CD4-positive, alpha-beta T cell (primary cell): ENCODE measurements at regions of chr17 and their contacts with region 1.

Region 1: GRCh38 chr17:17972126-17972951 is at the starts of genes DRC3 and TOM1L2:
- DNase-seq: peak; percentile 99 to 100 (median 100)
- ATAC-seq: peak; percentile 87
- H3K4me3 ChIP-seq: peak within 1 kb of the TSS; percentile 70
- H3K4me3 Mint-ChIP-seq: peak within 1 kb of the TSS; percentile 95
- H3K27ac ChIP-seq: peak within 1 kb of the TSS; percentile 76 to 79
- H3K27ac Mint-ChIP-seq: peak within 1 kb of the TSS; percentile 90
- H3K4me1 ChIP-seq: peaks cover 23% of the 10 kb centered on the region
- H3K4me1 Mint-ChIP-seq: peaks cover 49% of the 10 kb centered on the region
- H3K27me3 ChIP-seq: no peaks in the 10 kb centered on the region
- H3K27me3 Mint-ChIP-seq: no peaks in the 10 kb centered on the region
- CTCF ChIP-seq: no peak
- total RNA-seq, gene DRC3: 0.11 TPM in 1 of 2 experiments, not detected in the other
- total RNA-seq, gene TOM1L2: 28.5 to 30.5 TPM

Region 2: DNA sequence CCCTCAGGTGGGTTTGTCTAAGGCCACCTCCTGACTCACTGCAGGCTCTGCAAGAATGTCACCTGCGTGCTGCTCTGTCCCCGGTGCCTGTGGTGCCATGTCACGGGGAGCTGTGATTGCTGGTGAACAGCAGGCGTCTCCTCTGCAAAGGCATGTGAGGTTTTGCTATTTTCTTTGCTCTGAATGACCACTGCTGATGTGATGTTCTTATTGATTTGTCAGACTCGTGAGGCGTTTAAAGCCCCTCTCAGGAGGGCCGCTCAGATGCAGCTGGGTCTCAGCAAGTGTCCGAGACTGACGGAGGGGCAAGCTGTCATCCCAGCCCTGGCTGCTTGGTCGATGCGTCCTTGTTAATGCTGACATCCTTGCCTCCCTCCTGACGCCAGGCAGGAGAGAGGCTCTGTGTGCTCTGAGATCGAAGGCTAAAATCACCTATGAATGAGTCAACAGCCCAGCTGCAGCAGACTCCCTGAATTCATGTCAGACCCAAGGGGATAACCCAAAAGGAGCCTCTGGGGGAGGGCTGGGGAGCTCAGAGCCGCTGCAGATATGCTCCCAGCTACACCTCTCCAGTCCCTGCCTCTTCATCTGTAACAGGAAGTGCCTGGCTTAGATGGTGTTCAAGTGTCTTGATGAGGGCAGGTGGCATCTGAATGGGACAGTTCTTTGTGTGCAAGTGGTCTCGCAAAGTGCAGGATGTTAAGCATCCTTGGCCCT is 369.0 kb before region 1 on chr17:
- CTCF ChIA-PET with region 1: no interaction called
- POLR2A ChIA-PET with region 1: no interaction called
- intact Hi-C with region 1: no loop called
- DNase-seq: no peak
- ATAC-seq: no peak
- H3K4me3 ChIP-seq: no peak overlapping the region
- H3K4me3 Mint-ChIP-seq: no peak overlapping the region
- H3K27ac ChIP-seq: no peak overlapping the region
- H3K27ac Mint-ChIP-seq: no peak overlapping the region
- H3K4me1 ChIP-seq: no peaks in the 10 kb centered on the region
- H3K4me1 Mint-ChIP-seq: no peaks in the 10 kb centered on the region
- H3K27me3 ChIP-seq: no peaks in the 10 kb centered on the region
- H3K27me3 Mint-ChIP-seq: no peaks in the 10 kb centered on the region
- CTCF ChIP-seq: no peak

Region 3: GRCh38 chr17:17694169-17695081 is 277.9 kb before region 1 on chr17:
- CTCF ChIA-PET with region 1: no interaction called
- POLR2A ChIA-PET with region 1: no interaction called
- intact Hi-C with region 1: loop called in 1 of 2 experiments (anchors 5 kb)
- DNase-seq: peak; percentile 43 to 89 (median 63)
- ATAC-seq: peak; percentile 72
- H3K4me3 ChIP-seq: peak overlapping the region; percentile 76
- H3K4me3 Mint-ChIP-seq: peak overlapping the region; percentile 94
- H3K27ac ChIP-seq: peak overlapping the region; percentile 91 to 95
- H3K27ac Mint-ChIP-seq: peak overlapping the region; percentile 96
- H3K4me1 ChIP-seq: peaks cover 61% of the 10 kb centered on the region
- H3K4me1 Mint-ChIP-seq: peaks cover 62% of the 10 kb centered on the region
- H3K27me3 ChIP-seq: no peaks in the 10 kb centered on the region
- H3K27me3 Mint-ChIP-seq: no peaks in the 10 kb centered on the region
- CTCF ChIP-seq: no peak

Region 4: GRCh38 chr17:17808706-17809432 is 163.5 kb before region 1 on chr17:
- CTCF ChIA-PET with region 1: no interaction called
- POLR2A ChIA-PET with region 1: no interaction called
- intact Hi-C with region 1: no loop called
- DNase-seq: no peak
- ATAC-seq: no peak
- H3K4me3 ChIP-seq: no peak overlapping the region
- H3K4me3 Mint-ChIP-seq: no peak overlapping the region
- H3K27ac ChIP-seq: no peak overlapping the region
- H3K27ac Mint-ChIP-seq: peak overlapping the region; percentile 47
- H3K4me1 ChIP-seq: peaks cover 9% of the 10 kb centered on the region
- H3K4me1 Mint-ChIP-seq: peaks cover 8% of the 10 kb centered on the region
- H3K27me3 ChIP-seq: no peaks in the 10 kb centered on the region
- H3K27me3 Mint-ChIP-seq: no peaks in the 10 kb centered on the region
- CTCF ChIP-seq: no peak

Region 5: DNA sequence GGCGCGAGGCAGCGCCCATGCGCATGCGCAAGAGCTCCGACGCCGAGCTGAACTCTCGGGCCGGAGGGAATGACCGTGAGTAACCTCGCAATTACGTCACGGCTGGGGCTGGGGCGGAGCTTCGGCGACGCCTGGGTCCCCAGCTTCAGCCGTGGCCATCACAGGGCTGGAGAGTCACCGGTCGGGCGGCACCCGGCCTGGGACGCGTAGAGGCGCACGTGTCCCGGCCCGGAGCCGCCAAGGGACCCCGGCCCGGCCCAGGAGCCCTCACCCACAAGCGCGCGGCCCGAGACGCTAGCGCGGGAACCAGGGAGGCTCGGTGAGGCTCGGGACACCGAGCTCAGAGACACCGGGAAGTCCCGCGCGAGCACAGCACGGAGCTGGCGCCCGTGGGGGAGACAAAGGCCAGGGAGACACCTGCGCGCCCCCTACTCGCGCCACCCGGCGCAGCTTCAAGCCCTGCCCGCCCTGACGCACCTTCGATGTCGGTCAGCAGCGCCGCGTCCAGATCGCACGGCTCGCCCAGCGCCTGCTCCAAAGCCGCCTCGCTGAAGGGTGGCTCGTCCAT is 136.0 kb before region 1 on chr17:
- CTCF ChIA-PET with region 1: no interaction called
- POLR2A ChIA-PET with region 1: interaction called, 11 read pairs
- intact Hi-C with region 1: no loop called
- DNase-seq: peak; percentile 94 to 99 (median 97)
- ATAC-seq: peak; percentile 74
- H3K4me3 ChIP-seq: peak overlapping the region; percentile 77
- H3K4me3 Mint-ChIP-seq: peak overlapping the region; percentile 94
- H3K27ac ChIP-seq: peak overlapping the region; percentile 96 to 97
- H3K27ac Mint-ChIP-seq: peak overlapping the region; percentile 98
- H3K4me1 ChIP-seq: peaks cover 82% of the 10 kb centered on the region
- H3K4me1 Mint-ChIP-seq: peaks cover 69% of the 10 kb centered on the region
- H3K27me3 ChIP-seq: no peaks in the 10 kb centered on the region
- H3K27me3 Mint-ChIP-seq: no peaks in the 10 kb centered on the region
- CTCF ChIP-seq: no peak

Region 6: DNA sequence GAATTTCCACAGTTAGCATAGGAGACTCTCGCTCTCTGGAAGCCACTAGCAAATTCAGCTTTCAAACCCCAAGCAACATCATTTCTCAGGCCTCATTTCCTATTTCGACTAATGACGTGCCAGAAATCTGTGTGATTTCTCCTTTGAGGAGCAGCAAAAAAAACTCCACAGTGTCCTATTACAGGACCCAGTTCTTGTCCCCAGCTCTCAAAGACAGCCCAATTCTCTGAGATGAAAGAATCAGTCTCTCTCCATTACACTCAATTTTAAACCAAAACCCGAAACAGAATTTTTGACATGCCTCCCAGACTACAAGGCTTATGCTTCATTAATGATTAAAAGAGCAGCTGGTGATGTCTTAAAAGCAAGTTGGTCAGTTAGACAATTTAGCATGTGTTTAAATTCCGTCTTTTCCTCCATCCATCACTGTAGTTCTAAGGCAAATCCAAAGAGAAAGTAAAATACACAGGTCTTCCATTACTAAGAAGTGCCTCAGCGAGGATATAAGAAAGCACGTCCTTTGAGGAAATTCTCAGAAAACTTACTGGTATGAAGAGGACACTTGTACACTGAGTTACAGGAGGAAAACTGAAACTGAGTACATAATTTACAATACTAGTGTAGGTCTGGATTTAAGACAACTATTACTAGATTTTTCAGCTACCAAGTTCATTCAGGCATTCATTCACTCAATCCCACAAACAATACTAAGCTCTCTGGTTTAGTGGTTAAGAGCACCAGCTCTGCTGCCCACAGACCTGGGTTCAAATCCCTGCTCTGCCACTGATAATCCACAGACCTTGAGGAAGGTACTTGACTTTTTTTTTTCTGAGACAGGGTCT is 12.6 kb before region 1 on chr17:
- CTCF ChIA-PET with region 1: interaction called, 15 read pairs
- POLR2A ChIA-PET with region 1: interaction called, 115 read pairs
- intact Hi-C with region 1: loop called (anchors 2 kb)
- DNase-seq: peak in 4 of 14 experiments; percentile 16 to 68 (median 49)
- ATAC-seq: peak; percentile 37
- H3K4me3 ChIP-seq: peak overlapping the region; percentile 46
- H3K4me3 Mint-ChIP-seq: peak overlapping the region; percentile 85
- H3K27ac ChIP-seq: peak overlapping the region; percentile 64 to 92
- H3K27ac Mint-ChIP-seq: peak overlapping the region; percentile 97
- H3K4me1 ChIP-seq: peaks cover 45% of the 10 kb centered on the region
- H3K4me1 Mint-ChIP-seq: peaks cover 75% of the 10 kb centered on the region
- H3K27me3 ChIP-seq: no peaks in the 10 kb centered on the region
- H3K27me3 Mint-ChIP-seq: no peaks in the 10 kb centered on the region
- CTCF ChIP-seq: no peak

Region 7: GRCh38 chr17:17990282-17990681 is 17.9 kb after region 1 on chr17:
- CTCF ChIA-PET with region 1: no interaction called
- POLR2A ChIA-PET with region 1: no interaction called
- intact Hi-C with region 1: no loop called
- DNase-seq: no peak
- ATAC-seq: no peak
- H3K4me3 ChIP-seq: no peak overlapping the region
- H3K4me3 Mint-ChIP-seq: no peak overlapping the region
- H3K27ac ChIP-seq: no peak overlapping the region
- H3K27ac Mint-ChIP-seq: no peak overlapping the region
- H3K4me1 ChIP-seq: no peaks in the 10 kb centered on the region
- H3K4me1 Mint-ChIP-seq: no peaks in the 10 kb centered on the region
- H3K27me3 ChIP-seq: no peaks in the 10 kb centered on the region
- H3K27me3 Mint-ChIP-seq: no peaks in the 10 kb centered on the region
- CTCF ChIP-seq: no peak

Region 8: GRCh38 chr17:18038861-18039534 is 66.7 kb after region 1 on chr17 and contains the starts of genes ATPAF2 and GID4:
- CTCF ChIA-PET with region 1: interaction called, 11 read pairs
- POLR2A ChIA-PET with region 1: interaction called, 8 read pairs
- intact Hi-C with region 1: loop called (anchors 1 to 2 kb)
- DNase-seq: peak; percentile 99 to 100 (median 100)
- ATAC-seq: peak; percentile 91
- H3K4me3 ChIP-seq: peak within 1 kb of the TSS; percentile 93
- H3K4me3 Mint-ChIP-seq: peak within 1 kb of the TSS; percentile 100
- H3K27ac ChIP-seq: peak within 1 kb of the TSS; percentile 72 to 74
- H3K27ac Mint-ChIP-seq: peak within 1 kb of the TSS; percentile 91
- H3K4me1 ChIP-seq: peaks cover 34% of the 10 kb centered on the region
- H3K4me1 Mint-ChIP-seq: peaks cover 54% of the 10 kb centered on the region
- H3K27me3 ChIP-seq: no peaks in the 10 kb centered on the region
- H3K27me3 Mint-ChIP-seq: no peaks in the 10 kb centered on the region
- CTCF ChIP-seq: no peak
- total RNA-seq, gene ATPAF2: 20.8 to 21.9 TPM
- total RNA-seq, gene GID4: 3.4 to 3.7 TPM

Region 9: DNA sequence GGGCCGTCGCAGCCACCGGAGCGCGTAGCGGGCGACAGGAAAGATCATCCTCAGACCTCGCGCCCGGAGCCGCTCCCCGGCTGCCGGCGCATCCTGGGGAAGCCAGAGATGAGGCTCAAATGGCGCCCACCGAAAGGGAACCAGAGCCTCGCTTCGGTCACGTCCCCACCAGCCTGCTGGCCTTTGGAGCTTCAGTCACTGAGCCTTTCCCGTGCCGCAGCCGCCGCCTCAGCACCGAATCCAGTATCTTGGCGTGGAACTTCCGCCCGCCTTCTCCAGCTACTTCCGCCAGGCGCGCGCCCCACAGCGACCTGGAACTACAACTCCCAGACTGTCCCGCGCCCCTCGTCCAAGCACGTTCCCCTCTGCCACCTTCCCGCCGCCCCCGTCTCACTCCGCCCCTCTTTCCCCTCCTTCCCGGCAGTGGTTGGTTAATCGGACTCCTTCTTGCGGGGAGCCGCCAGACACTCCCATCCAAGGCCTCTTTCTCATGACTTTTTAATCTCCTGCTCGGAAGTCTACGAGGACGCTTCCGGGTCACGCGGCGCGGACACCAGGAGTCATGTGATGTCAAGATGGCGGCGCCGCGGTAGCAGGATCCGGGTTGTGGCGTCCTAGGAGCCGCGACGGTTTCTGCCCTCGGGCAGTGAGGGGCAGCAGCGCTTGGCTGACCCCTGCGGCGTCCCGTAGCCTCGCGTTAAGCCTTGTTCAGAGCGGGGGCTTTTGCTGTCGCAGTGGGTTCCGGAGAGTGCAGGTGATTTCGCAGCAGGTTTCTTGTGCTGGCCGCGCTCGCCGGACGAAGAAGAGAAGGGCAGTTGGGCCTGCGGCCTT is 342.6 kb after region 1 on chr17 and contains the starts of genes SMCR8 and TOP3A:
- CTCF ChIA-PET with region 1: no interaction called
- POLR2A ChIA-PET with region 1: interaction called, 4 read pairs
- intact Hi-C with region 1: loop called in 1 of 2 experiments (anchors 10 kb)
- DNase-seq: peak; percentile 94 to 99 (median 97)
- ATAC-seq: peak; percentile 95
- H3K4me3 ChIP-seq: peak within 1 kb of the TSS; percentile 86
- H3K4me3 Mint-ChIP-seq: peak within 1 kb of the TSS; percentile 93
- H3K27ac ChIP-seq: peak within 1 kb of the TSS; percentile 96 to 98
- H3K27ac Mint-ChIP-seq: peak within 1 kb of the TSS; percentile 84
- H3K4me1 ChIP-seq: peaks cover 74% of the 10 kb centered on the region
- H3K4me1 Mint-ChIP-seq: peaks cover 85% of the 10 kb centered on the region
- H3K27me3 ChIP-seq: no peaks in the 10 kb centered on the region
- H3K27me3 Mint-ChIP-seq: no peaks in the 10 kb centered on the region
- CTCF ChIP-seq: no peak
- total RNA-seq, gene SMCR8: 52.2 to 54.5 TPM
- total RNA-seq, gene TOP3A: 21.5 to 24.8 TPM

Region 10: DNA sequence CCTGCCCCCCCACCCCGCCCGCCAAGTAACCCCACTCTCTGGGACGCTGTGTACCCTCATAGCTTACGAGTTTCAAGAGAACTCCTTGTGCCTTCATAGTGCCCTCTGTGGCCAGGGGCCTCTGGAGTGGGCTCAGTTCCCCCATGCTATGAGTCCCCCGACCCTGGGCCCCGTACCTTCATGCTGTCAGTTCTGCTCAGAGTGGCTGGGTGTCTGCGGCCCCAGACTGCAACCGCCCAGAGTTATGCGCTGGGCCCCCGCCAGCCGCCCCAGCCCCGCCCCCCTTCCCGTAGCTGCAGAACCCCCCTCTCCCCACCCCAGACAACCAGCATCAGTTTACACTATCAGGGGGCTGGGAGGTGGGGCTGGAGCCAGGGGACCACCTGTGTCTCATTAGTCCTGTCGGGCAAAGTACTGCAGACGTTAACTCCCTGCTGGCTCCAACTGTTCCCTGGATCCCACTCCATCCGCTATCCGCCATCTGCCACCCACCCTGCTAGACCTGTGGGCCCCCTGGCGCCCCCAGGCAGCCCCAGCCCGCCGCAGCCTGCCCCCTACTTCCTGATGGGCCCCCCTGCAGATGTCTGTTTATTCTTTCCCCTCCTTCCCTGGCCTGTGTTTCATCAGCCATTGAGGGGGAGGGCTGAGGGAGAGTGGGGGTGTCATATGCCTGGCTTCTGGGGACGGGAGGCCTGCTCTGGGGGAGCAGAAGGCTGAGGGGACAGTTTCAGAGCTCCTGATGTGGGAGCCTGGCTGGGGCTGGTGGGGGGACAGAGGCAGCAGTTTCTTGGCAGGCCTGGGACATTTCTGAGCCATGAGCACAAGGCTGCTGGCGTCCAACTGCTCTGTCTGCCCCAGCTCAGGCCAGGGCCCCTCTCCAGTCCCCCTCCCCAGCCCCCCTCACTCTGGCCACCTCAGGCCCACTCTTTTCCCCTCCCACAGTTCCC is 1414.9 kb after region 1 on chr17 and contains the start of gene MFAP4:
- CTCF ChIA-PET with region 1: no interaction called
- POLR2A ChIA-PET with region 1: no interaction called
- intact Hi-C with region 1: no loop called
- DNase-seq: no peak
- ATAC-seq: no peak
- H3K4me3 ChIP-seq: no peak within 1 kb of the TSS
- H3K4me3 Mint-ChIP-seq: no peak within 1 kb of the TSS
- H3K27ac ChIP-seq: no peak within 1 kb of the TSS
- H3K27ac Mint-ChIP-seq: no peak within 1 kb of the TSS
- H3K4me1 ChIP-seq: no peaks in the 10 kb centered on the region
- H3K4me1 Mint-ChIP-seq: no peaks in the 10 kb centered on the region
- H3K27me3 ChIP-seq: no peaks in the 10 kb centered on the region
- H3K27me3 Mint-ChIP-seq: no peaks in the 10 kb centered on the region
- CTCF ChIP-seq: no peak
- total RNA-seq, gene MFAP4: not detected